Posterior cingulate gyrus (tissue), 11 donors: ENCODE measurements at regions of chr9 and their contacts with region 1.

Region 1: GRCh38 chr9:134443168-134444037 is 117.1 kb downstream of the RXRA start:
- DNase-seq: peak; percentile 82 to 99 (median 92)

Region 2: GRCh38 chr9:134170532-134171315 is 272.7 kb before region 1 on chr9:
- intact Hi-C with region 1: loop called (anchors 1 kb)
- DNase-seq: peak in 1 of 10 donors; percentile 77

Region 3: GRCh38 chr9:134365791-134366688 is 77.4 kb before region 1 on chr9:
- intact Hi-C with region 1: loop called (anchors 2 kb)
- DNase-seq: peak; percentile 82 to 98 (median 90)